ENCODE measurements at regions of chr16 and their contacts with region 1.

Region 1: GRCh38 chr16:46689365-46690280 is at the start of gene ORC6:
- DNase-seq: peak; percentile 95
- H3K4me3 Mint-ChIP-seq: no peak within 1 kb of the TSS
- H3K27ac Mint-ChIP-seq: no peak within 1 kb of the TSS
- H3K4me1 Mint-ChIP-seq: peaks cover 29% of the 10 kb centered on the region
- H3K27me3 Mint-ChIP-seq: no peaks in the 10 kb centered on the region
- total RNA-seq, gene ORC6: 68.2 and 69.1 TPM in 2 replicates

Region 2: GRCh38 chr16:46621006-46621933 is 68.4 kb before region 1 on chr16 and contains the start of gene SHCBP1:
- intact Hi-C with region 1: loop called (anchors 1 kb)
- DNase-seq: peak; percentile 80
- H3K4me3 Mint-ChIP-seq: peak within 1 kb of the TSS; percentile 97
- H3K27ac Mint-ChIP-seq: peak within 1 kb of the TSS; percentile 97
- H3K4me1 Mint-ChIP-seq: peaks cover 39% of the 10 kb centered on the region
- H3K27me3 Mint-ChIP-seq: no peaks in the 10 kb centered on the region
- total RNA-seq, gene SHCBP1: 46.5 and 46.8 TPM in 2 replicates

Region 3: GRCh38 chr16:46789499-46790414 is 100.1 kb after region 1 on chr16:
- intact Hi-C with region 1: loop called (anchors 1 kb)
- DNase-seq: peak; percentile 79
- H3K4me3 Mint-ChIP-seq: peak overlapping the region; percentile 61
- H3K27ac Mint-ChIP-seq: peak overlapping the region; percentile 59
- H3K4me1 Mint-ChIP-seq: peaks cover 22% of the 10 kb centered on the region
- H3K27me3 Mint-ChIP-seq: peaks cover 4% of the 10 kb centered on the region

Region 4: DNA sequence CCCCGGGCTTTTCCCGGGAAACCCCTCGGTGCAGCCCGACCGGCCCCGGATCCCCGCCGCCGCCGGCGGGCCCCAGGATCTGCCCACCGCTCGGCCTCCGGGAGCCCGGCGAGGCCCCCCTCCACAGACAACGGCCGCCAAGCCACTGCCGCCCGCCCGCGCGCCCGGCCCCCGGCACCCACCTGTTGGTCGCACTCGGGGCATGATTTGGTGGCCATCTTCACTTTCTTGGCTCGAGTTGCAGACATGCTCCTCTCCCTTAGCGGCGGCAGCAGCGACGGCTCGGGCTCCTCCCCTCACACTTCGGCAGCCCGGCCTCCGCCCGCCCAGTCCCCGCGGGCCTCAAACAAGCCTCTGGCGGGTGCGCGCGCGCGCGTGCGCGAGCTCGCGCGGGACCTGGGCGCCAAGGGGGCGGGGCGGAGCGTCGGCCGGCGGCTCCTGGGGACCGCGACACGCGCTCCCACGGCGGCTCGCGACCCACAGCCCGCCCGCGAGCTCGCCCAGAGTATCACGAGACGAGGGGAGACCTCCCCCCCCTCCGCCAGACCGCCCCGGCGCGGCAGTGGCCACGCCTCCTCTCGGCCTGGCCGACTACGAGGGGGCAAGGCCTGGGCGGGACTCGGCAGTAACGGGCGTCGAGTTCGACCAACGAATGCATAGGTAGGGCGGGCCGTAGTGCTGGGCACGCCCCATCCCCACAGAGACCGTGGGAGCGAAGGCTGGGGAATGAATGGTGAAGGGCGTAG is 141.5 kb after region 1 on chr16 and contains the start of gene C16orf87:
- intact Hi-C with region 1: loop called (anchors 1 kb)
- DNase-seq: peak; percentile 90
- H3K4me3 Mint-ChIP-seq: peak within 1 kb of the TSS; percentile 97
- H3K27ac Mint-ChIP-seq: peak within 1 kb of the TSS; percentile 98
- H3K4me1 Mint-ChIP-seq: peaks cover 40% of the 10 kb centered on the region
- H3K27me3 Mint-ChIP-seq: peaks cover 10% of the 10 kb centered on the region
- total RNA-seq, gene C16orf87: 40.8 and 44.5 TPM in 2 replicates

Region 5: GRCh38 chr16:46908540-46909372 is 219.1 kb after region 1 on chr16:
- intact Hi-C with region 1: loop called (anchors 2 kb)
- DNase-seq: peak; percentile 37
- H3K4me3 Mint-ChIP-seq: no peak overlapping the region
- H3K27ac Mint-ChIP-seq: peak overlapping the region; percentile 34
- H3K4me1 Mint-ChIP-seq: peaks cover 16% of the 10 kb centered on the region
- H3K27me3 Mint-ChIP-seq: no peaks in the 10 kb centered on the region

Region 6: DNA sequence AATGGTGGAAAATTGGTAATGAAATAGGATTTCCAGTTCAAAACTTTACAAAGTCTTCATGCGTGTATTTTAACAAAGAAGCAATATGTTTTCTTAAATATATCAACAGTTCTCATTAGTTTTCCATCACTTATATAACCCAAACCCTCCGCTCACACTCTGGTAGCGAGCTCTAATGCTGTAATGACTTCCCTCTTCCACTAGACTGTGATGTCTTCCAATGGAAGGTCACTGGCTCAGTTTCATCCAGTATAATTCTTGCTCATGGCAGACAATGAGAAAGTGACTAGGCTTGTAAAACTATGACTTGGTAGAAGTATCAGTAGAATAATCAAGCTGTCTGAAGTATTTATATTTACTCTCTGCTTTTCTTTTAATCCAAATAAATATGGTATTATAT is 421.3 kb after region 1 on chr16:
- intact Hi-C with region 1: loop called (anchors 10 kb)
- DNase-seq: no peak
- H3K4me3 Mint-ChIP-seq: no peak overlapping the region
- H3K27ac Mint-ChIP-seq: no peak overlapping the region
- H3K4me1 Mint-ChIP-seq: peaks cover 20% of the 10 kb centered on the region
- H3K27me3 Mint-ChIP-seq: no peaks in the 10 kb centered on the region